Naive thymus-derived CD4-positive, alpha-beta T cell (primary cell): ENCODE measurements at regions of chr4 and their contacts with region 1.

Region 1: GRCh38 chr4:15060213-15060612 is 57.9 kb downstream of the CPEB2 start:
- DNase-seq: no peak
- ATAC-seq: no peak
- H3K4me3 ChIP-seq: no peak overlapping the region
- H3K4me3 Mint-ChIP-seq: no peak overlapping the region
- H3K27ac ChIP-seq: no peak overlapping the region
- H3K27ac Mint-ChIP-seq: no peak overlapping the region
- H3K4me1 ChIP-seq: no peaks in the 10 kb centered on the region
- H3K4me1 Mint-ChIP-seq: peaks cover 0 to 5% (median 0%) of the 10 kb centered on the region in 7 donors
- H3K27me3 ChIP-seq: no peaks in the 10 kb centered on the region
- H3K27me3 Mint-ChIP-seq: no peaks in the 10 kb centered on the region

Region 2: GRCh38 chr4:15043922-15044321 is 16.3 kb before region 1 on chr4:
- CTCF ChIA-PET with region 1: no interaction called
- POLR2A ChIA-PET with region 1: no interaction called
- intact Hi-C with region 1: loop called in 1 of 2 experiments (anchors 2 kb)
- DNase-seq: no peak
- ATAC-seq: no peak
- H3K4me3 ChIP-seq: no peak overlapping the region
- H3K4me3 Mint-ChIP-seq: no peak overlapping the region
- H3K27ac ChIP-seq: no peak overlapping the region
- H3K27ac Mint-ChIP-seq: no peak overlapping the region
- H3K4me1 ChIP-seq: no peaks in the 10 kb centered on the region
- H3K4me1 Mint-ChIP-seq: peaks cover 0 to 16% (median 3%) of the 10 kb centered on the region in 7 donors
- H3K27me3 ChIP-seq: no peaks in the 10 kb centered on the region
- H3K27me3 Mint-ChIP-seq: no peaks in the 10 kb centered on the region